ENCODE measurements at regions of chr2 and their contacts with region 1.

Region 1: GRCh38 chr2:28621172-28622100 is 125.6 kb downstream of the PLB1 start:
- DNase-seq: peak; percentile 75 to 90
- ATAC-seq: peak; percentile 66

Region 2: DNA sequence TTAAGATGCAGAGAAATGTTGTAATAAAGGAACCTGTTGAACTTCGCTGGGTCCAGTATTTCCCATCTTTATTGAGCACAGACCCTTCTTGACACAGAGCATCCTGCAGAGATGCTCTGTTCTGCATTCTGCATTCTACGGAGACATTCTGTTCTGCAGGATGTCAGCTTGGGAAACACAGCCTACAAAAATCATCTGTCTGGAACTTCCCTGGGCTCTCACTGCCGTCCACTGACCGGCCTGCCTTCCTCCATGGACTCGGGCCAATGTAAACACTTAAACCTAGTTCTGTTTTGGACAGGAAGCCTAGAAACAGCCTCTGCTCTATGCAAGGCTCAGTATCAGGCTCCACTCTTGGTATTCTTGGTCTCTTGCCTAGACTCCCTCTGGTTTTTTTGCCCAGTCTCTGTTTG is 40.2 kb after region 1 on chr2:
- intact Hi-C with region 1: loop called in 1 of 2 experiments (anchors 5 kb)
- DNase-seq: peak; percentile 68 to 81
- ATAC-seq: peak; percentile 49

Region 3: GRCh38 chr2:29063646-29064343 is 442.4 kb after region 1 on chr2:
- intact Hi-C with region 1: no loop called
- DNase-seq: no peak
- ATAC-seq: no peak